GM10248 (cell line): ENCODE measurements at regions of chr17 and their contacts with region 1.

Region 1: DNA sequence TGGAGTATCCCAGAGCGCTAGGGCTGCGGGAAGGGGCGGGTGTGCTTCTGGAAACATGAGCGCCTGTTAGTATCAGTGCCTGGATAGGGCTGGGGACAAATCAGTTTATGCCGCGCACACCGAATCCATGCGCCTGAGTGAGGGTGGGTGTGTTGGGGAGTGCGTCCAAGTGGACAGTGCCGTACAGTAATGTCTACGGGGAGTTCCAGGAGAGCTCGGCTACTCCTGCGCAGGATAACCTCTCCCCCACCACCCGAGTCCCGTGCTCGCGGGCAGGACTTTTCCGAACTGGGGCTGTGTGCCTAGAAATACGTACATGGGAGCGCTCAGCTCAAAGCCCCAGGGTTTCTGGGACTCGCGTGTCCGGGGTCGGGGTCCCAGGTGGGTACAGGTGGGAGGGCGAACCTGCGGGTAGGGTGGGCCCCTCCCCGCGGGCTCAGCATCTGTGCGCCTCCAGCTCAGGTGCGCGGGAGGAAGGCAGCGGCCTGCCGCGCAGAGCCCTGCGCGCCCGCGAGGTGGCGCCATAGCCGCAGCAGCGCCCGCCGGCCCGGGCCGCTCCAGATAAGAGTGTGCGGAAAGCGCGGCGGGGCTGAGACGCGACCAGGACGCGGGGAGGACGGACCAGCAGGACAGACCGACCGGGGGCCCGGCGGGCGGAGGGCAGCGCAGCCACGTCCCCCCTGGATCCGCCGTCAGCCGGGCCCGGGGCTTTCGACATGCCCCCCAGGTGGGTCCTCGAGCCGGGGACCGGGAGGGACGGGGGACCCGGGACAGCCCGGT is at the start of gene HIC1:
- DNase-seq: peak; percentile 83
- CTCF ChIP-seq: peak; percentile 94

Region 2: DNA sequence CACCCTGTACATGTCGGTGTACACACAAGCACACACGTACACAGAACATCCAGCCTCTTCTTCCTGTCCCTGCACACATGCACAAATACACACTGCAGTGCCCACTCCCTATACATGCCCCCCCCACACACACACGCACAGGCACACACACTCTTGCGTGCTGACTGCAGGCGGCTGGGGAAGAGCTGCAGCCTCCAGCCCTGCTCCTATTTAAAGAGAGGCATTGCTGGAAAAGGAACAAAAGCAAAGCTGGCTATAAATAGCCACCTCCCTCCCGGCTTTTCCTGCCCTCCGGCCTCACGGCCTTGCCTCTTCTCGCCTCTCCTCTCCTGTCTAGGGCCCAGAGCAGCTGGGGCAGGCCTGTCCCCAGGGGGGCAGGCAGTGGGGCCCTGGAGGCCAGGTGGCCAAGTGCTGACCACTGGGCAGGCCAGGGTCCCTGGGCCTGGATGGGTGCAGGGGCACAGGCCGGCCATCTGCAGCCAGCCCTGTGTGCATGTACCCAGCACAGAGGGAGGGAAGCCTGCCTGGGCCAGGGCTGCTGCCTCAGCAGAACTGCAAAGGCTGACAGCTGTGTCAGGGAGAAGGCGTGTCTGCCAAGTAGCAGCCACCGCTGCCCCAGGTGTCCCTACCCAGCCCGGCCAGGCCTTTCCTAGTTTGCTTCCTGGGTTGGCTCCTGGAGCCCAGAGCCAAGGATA is 55.0 kb before region 1 on chr17:
- CTCF ChIA-PET with region 1: no interaction called
- POLR2A ChIA-PET with region 1: no interaction called
- DNase-seq: no peak
- CTCF ChIP-seq: no peak

Region 3: GRCh38 chr17:2075336-2076086 is 20.8 kb after region 1 on chr17:
- CTCF ChIA-PET with region 1: interaction called, 188 read pairs
- POLR2A ChIA-PET with region 1: no interaction called
- DNase-seq: peak; percentile 37
- CTCF ChIP-seq: no peak

Region 4: DNA sequence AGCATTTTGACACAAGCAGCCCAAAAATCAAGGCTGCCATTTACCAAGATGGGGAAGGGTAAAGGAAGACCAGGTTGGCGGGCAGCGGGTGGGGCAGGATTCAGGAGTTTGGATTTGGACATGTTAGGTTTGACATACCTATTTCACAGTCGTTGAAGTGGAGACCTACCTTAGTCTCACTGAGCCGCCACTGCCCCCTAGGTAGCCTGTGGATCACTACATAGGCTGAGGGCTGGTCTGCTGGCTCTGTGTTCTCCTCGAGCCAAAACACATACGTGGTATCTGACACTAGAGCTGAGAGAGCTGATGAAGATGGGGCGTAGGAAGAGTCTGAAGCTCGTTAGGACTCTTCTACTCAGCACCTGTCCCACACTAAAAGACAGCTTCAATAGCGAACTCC is 115.3 kb after region 1 on chr17:
- CTCF ChIA-PET with region 1: interaction called, 10 read pairs
- POLR2A ChIA-PET with region 1: no interaction called
- DNase-seq: peak; percentile 64
- CTCF ChIP-seq: peak; percentile 41

Region 5: GRCh38 chr17:2259769-2260536 is 205.3 kb after region 1 on chr17:
- CTCF ChIA-PET with region 1: interaction called, 70 read pairs
- POLR2A ChIA-PET with region 1: interaction called, 5 read pairs
- DNase-seq: peak; percentile 73
- CTCF ChIP-seq: no peak

Region 6: GRCh38 chr17:2289878-2290478 is 235.3 kb after region 1 on chr17:
- CTCF ChIA-PET with region 1: interaction called, 12 read pairs
- POLR2A ChIA-PET with region 1: no interaction called
- DNase-seq: no peak
- CTCF ChIP-seq: no peak

Region 7: GRCh38 chr17:2347547-2348307 is 293.0 kb after region 1 on chr17:
- CTCF ChIA-PET with region 1: interaction called, 23 read pairs
- POLR2A ChIA-PET with region 1: no interaction called
- DNase-seq: no peak
- CTCF ChIP-seq: no peak